GM18951 (cell line): ENCODE measurements at regions of chr4 and their contacts with region 1.

Region 1: DNA sequence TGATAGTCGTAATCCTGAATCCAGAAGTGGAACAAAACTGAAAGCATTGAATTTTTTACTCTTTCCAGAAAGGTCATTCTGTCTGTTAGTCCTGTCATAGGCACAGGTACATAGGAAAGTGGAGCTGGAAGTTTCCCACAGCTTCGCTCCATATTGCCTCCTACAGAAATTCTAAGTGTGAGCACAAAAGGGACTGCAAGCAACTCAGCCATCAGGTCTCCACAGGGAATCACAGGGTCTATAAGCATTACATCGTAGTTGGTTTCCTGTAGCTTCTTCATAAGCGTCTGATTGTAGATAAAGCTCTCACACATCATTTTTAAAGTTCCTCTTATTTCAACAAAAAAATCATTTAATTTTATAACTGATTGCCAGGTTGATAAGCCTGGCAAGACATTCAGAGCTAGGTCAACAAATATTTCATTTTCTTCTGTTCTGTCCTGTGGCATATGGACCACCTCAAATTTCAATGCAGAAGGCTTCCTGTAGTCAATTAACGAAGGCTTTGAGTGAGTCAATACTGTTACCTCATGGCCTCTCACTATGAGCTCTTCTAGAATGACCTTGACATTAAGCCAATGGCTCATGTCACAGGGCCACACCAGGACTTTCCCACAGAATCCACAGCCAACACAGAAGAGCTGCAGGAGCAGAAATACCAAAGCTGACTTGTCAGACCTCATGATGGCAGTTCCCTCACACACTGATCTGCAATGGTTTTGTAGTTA is at the start of gene UGT2A3:
- POLR2A ChIP-seq: no peak

Region 2: DNA sequence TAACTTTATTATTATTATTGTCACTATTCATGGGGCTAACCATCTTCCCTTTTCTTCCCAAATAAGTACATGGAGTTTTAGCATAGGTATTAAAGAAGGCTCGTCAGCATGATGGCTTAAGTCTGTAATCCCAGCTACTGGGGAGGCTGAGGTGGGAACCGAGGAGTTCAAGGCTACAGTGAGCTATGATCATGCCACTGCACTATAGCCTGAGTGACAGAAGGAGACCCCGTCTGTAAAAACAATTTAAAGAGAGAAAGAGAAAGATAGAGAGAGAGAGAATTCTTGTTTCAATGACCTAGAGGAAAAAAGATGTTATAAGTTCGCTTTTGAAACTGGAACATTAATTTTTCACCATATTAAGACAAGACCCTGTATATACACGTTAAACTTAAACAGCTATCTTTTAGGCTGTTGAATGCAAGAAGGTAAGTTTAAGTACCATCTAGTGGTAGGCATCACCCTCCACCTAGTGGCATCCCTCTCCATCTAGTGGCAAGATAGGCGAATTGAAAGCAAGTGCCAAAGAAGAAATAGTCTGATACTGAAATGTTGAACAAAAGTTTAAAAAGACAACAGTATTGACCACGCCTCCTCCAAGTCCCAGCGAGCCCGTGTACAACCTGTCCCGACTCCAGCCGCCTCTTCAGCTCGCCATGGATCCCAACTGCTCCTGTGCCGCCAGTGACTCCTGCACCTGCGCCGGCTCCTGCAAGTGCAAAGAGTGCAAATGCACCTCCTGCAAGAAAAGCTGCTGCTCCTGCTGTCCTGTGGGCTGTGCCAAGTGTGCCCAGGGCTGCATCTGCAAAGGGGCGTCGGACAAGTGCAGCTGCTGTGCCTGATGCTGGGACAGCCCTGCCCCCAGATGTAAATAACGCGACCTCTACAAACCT is 575.3 kb before region 1 on chr4:
- in situ Hi-C with region 1: no loop called
- POLR2A ChIP-seq: no peak

Region 3: GRCh38 chr4:69054578-69055200 is 103.4 kb after region 1 on chr4:
- in situ Hi-C with region 1: loop called (anchors 5 kb)
- POLR2A ChIP-seq: no peak